ENCODE measurements at regions of chr13 and their contacts with region 1.

Region 1: DNA sequence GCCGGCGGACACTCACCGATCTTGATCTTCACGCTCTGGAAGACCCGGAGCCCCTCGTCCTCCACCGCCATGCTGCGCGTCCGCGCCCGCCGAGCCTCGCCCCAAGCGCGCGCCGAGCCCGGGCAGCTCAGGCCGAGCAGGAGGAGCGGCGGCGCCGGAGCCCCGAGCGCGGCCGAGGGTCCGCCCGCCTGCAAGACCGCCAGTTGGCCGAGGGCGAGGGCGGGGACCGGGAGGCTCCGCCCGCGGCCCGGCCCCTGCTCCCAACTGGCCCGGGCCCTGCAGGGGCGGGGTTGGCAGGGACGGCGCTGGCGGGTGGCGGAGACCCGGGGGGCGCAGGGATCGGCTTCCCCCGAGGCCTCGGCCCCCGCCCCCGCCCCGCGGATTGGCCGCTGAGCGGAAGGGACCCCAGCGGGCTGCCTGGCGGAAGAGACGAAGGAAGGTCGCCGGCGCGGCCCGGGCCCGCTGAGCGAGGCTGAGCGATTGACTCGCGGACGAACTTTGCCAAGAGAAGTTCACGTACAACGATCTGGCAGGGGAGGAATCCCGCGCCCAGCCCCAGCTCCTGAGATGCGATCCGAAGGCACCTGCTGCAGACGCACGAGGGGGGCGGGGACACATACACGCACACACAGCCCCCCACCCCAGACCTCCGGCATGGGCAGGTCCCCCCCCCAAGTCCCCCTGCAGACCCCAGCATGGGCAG is at the start of gene RASA3:
- DNase-seq: peak; percentile 73
- H3K4me3 Mint-ChIP-seq: peak within 1 kb of the TSS; percentile 97
- H3K27ac Mint-ChIP-seq: peak within 1 kb of the TSS; percentile 93
- H3K4me1 Mint-ChIP-seq: peaks cover 39% of the 10 kb centered on the region
- H3K27me3 Mint-ChIP-seq: no peaks in the 10 kb centered on the region
- total RNA-seq, gene RASA3: 45.9 to 49.3 TPM

Region 2: GRCh38 chr13:114065141-114065925 is 67.2 kb before region 1 on chr13:
- CTCF ChIA-PET with region 1: interaction called, 4 read pairs
- POLR2A ChIA-PET with region 1: interaction called, 11 read pairs
- intact Hi-C with region 1: loop called (anchors 1 kb)
- DNase-seq: peak; percentile 90
- H3K4me3 Mint-ChIP-seq: peak overlapping the region; percentile 70
- H3K27ac Mint-ChIP-seq: peak overlapping the region; percentile 96
- H3K4me1 Mint-ChIP-seq: peaks cover 65% of the 10 kb centered on the region
- H3K27me3 Mint-ChIP-seq: no peaks in the 10 kb centered on the region

Region 3: GRCh38 chr13:114118511-114119123 is 14.0 kb before region 1 on chr13:
- CTCF ChIA-PET with region 1: no interaction called
- POLR2A ChIA-PET with region 1: interaction called, 7 read pairs
- intact Hi-C with region 1: loop called (anchors 1 kb)
- DNase-seq: no peak
- H3K4me3 Mint-ChIP-seq: no peak overlapping the region
- H3K27ac Mint-ChIP-seq: peak overlapping the region; percentile 28
- H3K4me1 Mint-ChIP-seq: peaks cover 75% of the 10 kb centered on the region
- H3K27me3 Mint-ChIP-seq: no peaks in the 10 kb centered on the region

Region 4: GRCh38 chr13:114226699-114227323 is 94.2 kb after region 1 on chr13:
- CTCF ChIA-PET with region 1: interaction called, 3 read pairs
- POLR2A ChIA-PET with region 1: no interaction called
- intact Hi-C with region 1: loop called (anchors 1 kb)
- DNase-seq: peak; percentile 93
- H3K4me3 Mint-ChIP-seq: peak overlapping the region; percentile 6
- H3K27ac Mint-ChIP-seq: peak overlapping the region; percentile 68
- H3K4me1 Mint-ChIP-seq: peaks cover 46% of the 10 kb centered on the region
- H3K27me3 Mint-ChIP-seq: peaks cover 3% of the 10 kb centered on the region

Measured in activated CD4-positive, alpha-beta memory T cell treated with anti-CD3 and anti-CD28 coated beads for 36 hours (primary cell).